Gastrocnemius medialis (tissue), 4 donors: ENCODE measurements at regions of chr1 and their contacts with region 1.

Region 1: GRCh38 chr1:58739856-58740466 is 40.1 kb upstream of the MYSM1 start:
- DNase-seq: no peak
- ATAC-seq: peak in 1 of 2 donors; percentile 79
- H3K4me3 ChIP-seq: no peak overlapping the region
- H3K27ac ChIP-seq: no peak overlapping the region
- H3K4me1 ChIP-seq: peaks cover 6% of the 10 kb centered on the region in 2 donors
- H3K27me3 ChIP-seq: no peaks in the 10 kb centered on the region
- CTCF ChIP-seq: peak; percentile 78 to 95 (median 83)
- POLR2A ChIP-seq: no peak

Region 2: DNA sequence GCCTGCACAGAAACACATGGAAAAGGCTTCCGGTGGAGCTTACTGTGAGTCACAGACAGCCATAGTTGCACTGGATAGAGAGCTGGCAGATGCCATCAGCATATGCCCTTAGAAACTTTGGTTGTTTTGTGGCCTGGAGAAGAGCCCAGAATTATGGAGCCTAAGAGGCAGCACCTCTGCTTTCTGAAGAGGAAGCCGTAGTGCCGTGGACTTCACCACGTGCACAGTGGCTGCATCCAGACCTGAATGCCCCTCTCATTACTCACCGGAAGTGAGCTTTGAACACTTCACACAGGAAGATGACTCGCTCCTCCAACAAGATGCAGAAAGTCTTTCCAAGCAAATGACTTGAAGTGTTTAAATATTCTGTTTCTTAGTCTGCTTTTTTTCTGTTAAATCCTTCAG is 15.5 kb after region 1 on chr1:
- in situ Hi-C with region 1: no loop called
- intact Hi-C with region 1: no loop called
- DNase-seq: peak; percentile 37 to 69
- ATAC-seq: peak; percentile 78 to 86
- H3K4me3 ChIP-seq: peak overlapping the region in 2 of 4 donors; percentile 2 to 3
- H3K27ac ChIP-seq: peak overlapping the region; percentile 61 to 67 (median 66)
- H3K4me1 ChIP-seq: peaks cover 0 to 25% of the 10 kb centered on the region in 2 donors
- H3K27me3 ChIP-seq: no peaks in the 10 kb centered on the region
- CTCF ChIP-seq: no peak
- POLR2A ChIP-seq: peak in 1 of 2 donors; percentile 30

Region 3: DNA sequence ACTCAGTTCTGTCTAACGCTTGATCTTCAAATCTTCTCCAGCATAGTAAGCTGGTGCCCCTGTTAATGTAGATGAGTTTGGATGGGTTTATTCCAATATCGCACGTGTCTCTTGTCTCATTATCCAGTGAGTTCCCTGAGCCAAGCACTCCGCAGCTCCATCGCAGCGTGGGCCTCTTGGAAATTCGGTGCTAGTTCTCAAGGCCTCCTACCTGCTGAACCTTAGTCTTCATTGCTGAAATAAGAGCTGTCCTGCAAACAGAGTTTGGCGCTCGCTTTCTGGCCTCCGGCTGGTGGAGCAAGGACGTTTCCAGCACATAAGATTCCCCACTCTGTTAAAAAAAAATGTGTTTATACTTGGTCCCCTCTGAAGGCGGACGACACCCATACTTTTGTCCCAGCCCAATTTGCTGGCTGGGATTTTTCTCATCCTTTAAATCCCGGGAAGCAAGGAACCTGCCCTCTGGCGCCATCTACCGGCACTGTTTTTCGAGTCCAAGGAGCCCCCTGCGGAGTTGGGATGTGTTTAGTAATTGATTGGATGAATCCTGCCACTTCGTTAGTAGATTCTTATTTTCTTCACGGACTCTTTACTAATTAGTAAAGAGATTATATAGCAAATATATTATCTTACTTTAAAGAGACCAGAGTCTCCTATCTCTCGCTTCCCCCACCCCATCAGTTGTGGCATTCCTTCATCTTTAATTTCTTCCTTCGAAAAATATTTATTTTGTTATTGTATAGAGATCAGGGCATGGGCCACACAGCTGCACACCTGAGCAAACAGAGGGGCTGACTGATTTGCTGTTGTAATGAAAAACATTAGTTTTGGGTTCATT is 29.2 kb after region 1 on chr1:
- in situ Hi-C with region 1: no loop called
- intact Hi-C with region 1: loop called (anchors 1 kb)
- DNase-seq: peak; percentile 26 to 58
- ATAC-seq: peak; percentile 51 to 54
- H3K4me3 ChIP-seq: no peak overlapping the region
- H3K27ac ChIP-seq: no peak overlapping the region
- H3K4me1 ChIP-seq: peaks cover 12 to 16% of the 10 kb centered on the region in 2 donors
- H3K27me3 ChIP-seq: no peaks in the 10 kb centered on the region
- CTCF ChIP-seq: peak; percentile 65 to 92 (median 75)
- POLR2A ChIP-seq: no peak